ENCODE measurements at regions of chr6 and their contacts with region 1.

Region 1: GRCh38 chr6:33014841-33015634 is 5.6 kb upstream of the HLA-DOA start:
- DNase-seq: no peak

Region 2: DNA sequence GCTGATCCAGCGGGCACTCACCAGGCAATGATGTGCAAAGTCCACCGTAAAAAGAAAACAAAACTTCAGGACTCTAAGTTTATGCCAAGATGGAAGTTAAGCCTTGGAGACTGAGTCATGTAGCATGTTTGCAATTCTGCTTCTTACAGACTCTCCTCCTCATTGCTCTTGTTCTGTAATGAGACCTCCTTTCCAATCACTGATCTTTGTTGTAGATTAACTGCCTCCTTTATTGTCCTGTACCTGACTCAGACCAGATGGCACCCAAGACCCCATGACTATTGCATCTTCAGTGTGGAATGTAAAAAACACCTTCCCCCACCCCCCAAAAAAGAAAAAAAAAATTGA is 1163.6 kb before region 1 on chr6:
- intact Hi-C with region 1: no loop called
- DNase-seq: no peak

Region 3: DNA sequence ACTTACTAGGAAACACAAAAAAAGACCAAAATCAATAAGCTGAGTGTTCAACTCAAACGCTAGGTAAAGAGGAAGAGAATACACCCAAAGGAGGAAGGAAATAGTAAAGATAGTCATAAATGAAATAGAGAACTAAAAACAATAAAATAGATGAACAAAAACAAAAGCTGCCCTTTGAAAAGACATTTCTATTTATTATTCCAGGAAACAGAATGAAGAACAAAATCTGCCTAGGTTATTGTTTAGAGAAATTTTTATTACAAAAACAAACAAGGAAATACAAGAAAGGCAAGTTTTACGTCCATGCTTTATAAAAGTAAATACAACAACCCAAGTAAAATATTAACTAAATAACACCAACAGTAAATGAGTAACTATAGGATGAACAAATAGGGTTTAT is 94.3 kb before region 1 on chr6:
- intact Hi-C with region 1: no loop called
- DNase-seq: no peak

Region 4: GRCh38 chr6:33241968-33242367 is 226.9 kb after region 1 on chr6:
- intact Hi-C with region 1: loop called in 1 of 2 experiments (anchors 5 kb)
- DNase-seq: no peak

Measured in posterior vena cava (tissue), 2 donors.